ENCODE measurements at regions of chr16 and their contacts with region 1.

Region 1: DNA sequence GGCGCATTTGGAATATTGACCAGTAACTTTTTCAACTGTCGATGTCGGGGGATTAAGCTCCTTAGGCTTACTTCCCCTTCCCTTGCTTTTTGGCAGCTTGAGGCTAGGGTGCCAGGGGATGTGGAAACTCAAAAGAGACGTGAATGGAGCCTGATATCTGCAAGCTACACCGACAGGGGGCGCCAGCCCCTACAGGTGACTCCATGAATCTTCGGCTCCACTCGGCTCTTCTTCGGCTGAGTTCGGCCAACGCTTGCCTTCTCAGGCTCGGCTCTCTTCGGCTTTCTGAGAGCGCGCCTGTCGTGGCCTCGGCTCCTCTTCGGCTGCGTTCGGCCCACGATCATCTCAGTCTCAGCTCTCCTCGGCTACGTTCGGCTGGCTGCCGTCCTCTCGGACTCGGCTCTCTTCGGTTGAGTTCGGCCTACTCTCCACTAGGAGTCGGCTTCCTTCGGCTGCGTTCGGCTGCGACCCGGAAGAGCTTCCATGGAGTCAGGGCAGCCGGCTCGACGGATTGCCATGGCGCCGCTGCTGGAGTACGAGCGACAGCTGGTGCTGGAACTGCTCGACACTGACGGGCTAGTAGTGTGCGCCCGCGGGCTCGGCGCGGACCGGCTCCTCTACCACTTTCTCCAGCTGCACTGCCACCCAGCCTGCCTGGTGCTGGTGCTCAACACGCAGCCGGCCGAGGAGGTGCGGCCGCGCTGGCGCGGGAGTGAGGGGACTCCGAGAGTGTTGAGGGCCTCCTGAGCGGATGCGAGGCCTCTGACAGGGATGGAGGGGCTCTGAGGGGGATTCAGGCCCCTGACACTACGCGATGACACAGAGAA is at the start of gene ERCC4:
- DNase-seq: peak; percentile 100
- ATAC-seq: peak; percentile 96
- H3K4me3 ChIP-seq: peak within 1 kb of the TSS; percentile 64 to 89 (median 79)
- H3K4me3 Mint-ChIP-seq: peak within 1 kb of the TSS; percentile 94
- H3K27ac ChIP-seq: peak within 1 kb of the TSS; percentile 12 to 85
- H3K27ac Mint-ChIP-seq: peak within 1 kb of the TSS; percentile 79
- H3K4me1 ChIP-seq: peaks cover 12 to 15% of the 10 kb centered on the region in 2 donors
- H3K4me1 Mint-ChIP-seq: peaks cover 24% of the 10 kb centered on the region
- H3K27me3 ChIP-seq: no peaks in the 10 kb centered on the region
- H3K27me3 Mint-ChIP-seq: no peaks in the 10 kb centered on the region
- CTCF ChIP-seq: peak; percentile 91
- total RNA-seq, gene ERCC4: 11.9 and 13.2 TPM in 2 replicates

Region 2: GRCh38 chr16:12803203-12804097 is 1116.4 kb before region 1 on chr16 and contains the start of gene CPPED1:
- CTCF ChIA-PET with region 1: no interaction called
- POLR2A ChIA-PET with region 1: no interaction called
- intact Hi-C with region 1: loop called (anchors 5 kb)
- DNase-seq: peak; percentile 95
- ATAC-seq: peak; percentile 88
- H3K4me3 ChIP-seq: peak within 1 kb of the TSS; percentile 68 to 99 (median 73)
- H3K4me3 Mint-ChIP-seq: peak within 1 kb of the TSS; percentile 92
- H3K27ac ChIP-seq: peak within 1 kb of the TSS; percentile 58 to 72
- H3K27ac Mint-ChIP-seq: peak within 1 kb of the TSS; percentile 93
- H3K4me1 ChIP-seq: peaks cover 19 to 24% of the 10 kb centered on the region in 2 donors
- H3K4me1 Mint-ChIP-seq: peaks cover 21% of the 10 kb centered on the region
- H3K27me3 ChIP-seq: peaks cover 0 to 2% (median 0%) of the 10 kb centered on the region in 4 experiments
- H3K27me3 Mint-ChIP-seq: peaks cover 3% of the 10 kb centered on the region
- CTCF ChIP-seq: no peak
- total RNA-seq, gene CPPED1: 11.3 and 14.1 TPM in 2 replicates

Region 3: DNA sequence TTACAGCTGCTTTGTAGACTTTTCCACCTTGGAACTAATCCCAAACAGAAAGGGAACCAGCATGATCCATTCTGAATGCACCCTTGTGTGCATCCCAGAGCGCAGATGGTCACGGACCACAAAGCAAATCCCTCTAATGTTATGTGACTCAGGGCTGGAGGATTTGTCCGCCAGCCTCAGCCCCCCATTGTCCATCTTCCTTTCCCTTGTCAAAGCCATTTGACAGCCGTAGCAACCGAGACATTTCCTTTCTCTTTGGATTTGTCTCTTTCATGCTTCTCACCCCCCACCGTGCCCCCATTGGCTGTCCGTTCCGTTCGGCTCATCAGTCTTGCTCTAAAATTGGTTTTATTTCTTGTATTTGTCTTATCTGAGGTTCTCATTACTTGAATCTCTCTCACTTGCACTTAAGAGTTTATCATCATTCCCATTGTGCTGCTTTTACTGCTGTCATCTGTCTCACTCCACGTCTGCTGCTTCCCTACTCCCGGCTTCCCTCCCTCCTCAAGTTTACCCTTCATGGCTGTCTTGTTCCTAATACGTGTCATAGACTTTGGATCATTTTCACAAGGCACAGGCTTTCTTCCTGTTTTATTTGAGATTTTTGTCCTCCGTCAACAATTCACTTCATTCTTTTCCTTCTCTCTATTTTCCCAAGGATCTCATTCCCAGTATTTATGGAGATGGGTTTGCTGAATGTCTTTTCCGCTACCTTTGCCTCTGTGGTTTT is 163.3 kb before region 1 on chr16:
- CTCF ChIA-PET with region 1: no interaction called
- POLR2A ChIA-PET with region 1: no interaction called
- intact Hi-C with region 1: no loop called
- DNase-seq: no peak
- ATAC-seq: no peak
- H3K4me3 ChIP-seq: no peak overlapping the region
- H3K4me3 Mint-ChIP-seq: no peak overlapping the region
- H3K27ac ChIP-seq: no peak overlapping the region
- H3K27ac Mint-ChIP-seq: no peak overlapping the region
- H3K4me1 ChIP-seq: no peaks in the 10 kb centered on the region
- H3K4me1 Mint-ChIP-seq: no peaks in the 10 kb centered on the region
- H3K27me3 ChIP-seq: peaks cover 0 to 3% (median 0%) of the 10 kb centered on the region in 4 experiments
- H3K27me3 Mint-ChIP-seq: peaks cover 15% of the 10 kb centered on the region
- CTCF ChIP-seq: no peak

Region 4: DNA sequence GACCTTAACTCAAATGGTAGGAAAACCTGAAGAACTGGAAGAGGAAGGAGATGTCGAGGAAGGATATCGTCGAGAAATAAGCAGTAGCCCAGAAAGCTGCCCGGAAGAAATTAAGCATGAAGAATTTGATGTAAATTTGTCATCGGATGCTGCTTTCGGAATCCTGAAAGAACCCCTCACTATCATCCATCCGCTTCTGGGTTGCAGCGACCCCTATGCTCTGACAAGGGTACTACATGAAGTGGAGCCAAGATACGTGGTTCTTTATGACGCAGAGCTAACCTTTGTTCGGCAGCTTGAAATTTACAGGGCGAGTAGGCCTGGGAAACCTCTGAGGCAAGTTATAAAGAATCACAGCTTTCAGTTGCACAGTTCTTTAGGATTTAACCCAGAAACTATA is 15.5 kb after region 1 on chr16:
- CTCF ChIA-PET with region 1: interaction called, 25 read pairs
- POLR2A ChIA-PET with region 1: no interaction called
- intact Hi-C with region 1: no loop called
- DNase-seq: no peak
- ATAC-seq: no peak
- H3K4me3 ChIP-seq: no peak overlapping the region
- H3K4me3 Mint-ChIP-seq: no peak overlapping the region
- H3K27ac ChIP-seq: no peak overlapping the region
- H3K27ac Mint-ChIP-seq: no peak overlapping the region
- H3K4me1 ChIP-seq: no peaks in the 10 kb centered on the region
- H3K4me1 Mint-ChIP-seq: no peaks in the 10 kb centered on the region
- H3K27me3 ChIP-seq: no peaks in the 10 kb centered on the region
- H3K27me3 Mint-ChIP-seq: no peaks in the 10 kb centered on the region
- CTCF ChIP-seq: peak; percentile 66

Region 5: DNA sequence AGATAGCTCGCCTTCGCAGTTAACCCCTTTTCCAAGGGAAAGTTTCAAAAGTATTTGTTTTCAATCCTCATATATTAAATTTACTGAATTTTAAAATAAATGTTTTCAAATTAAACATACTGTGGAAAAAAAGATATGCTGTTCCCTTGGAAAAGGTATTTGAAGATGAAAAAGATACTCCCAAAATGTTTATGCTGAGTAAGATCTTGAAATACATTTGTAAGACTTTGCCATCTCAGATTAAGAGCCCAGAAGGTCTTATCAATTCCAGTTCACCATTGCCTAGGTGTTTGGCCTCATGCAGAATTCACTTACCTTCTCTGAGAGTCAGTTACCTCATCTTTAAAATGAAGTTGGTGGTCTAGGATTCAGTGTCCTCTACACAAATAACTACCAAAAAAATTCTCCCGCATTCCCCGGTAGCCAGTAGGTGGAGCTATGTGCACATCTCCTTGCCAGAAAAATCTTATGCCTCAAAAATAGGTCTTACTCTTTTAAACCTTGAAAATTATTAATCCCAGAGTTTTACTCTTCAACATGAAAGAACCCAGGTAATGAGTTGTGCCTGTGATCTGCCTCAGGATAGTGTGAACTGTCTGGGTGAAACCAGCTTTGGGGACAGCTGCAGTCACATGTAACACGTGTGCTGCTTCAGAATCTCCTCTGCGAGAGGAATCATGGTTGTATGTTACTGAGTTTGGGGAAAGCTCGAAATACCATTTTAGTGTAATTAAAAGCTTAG is 329.6 kb after region 1 on chr16:
- CTCF ChIA-PET with region 1: interaction called, 22 read pairs
- POLR2A ChIA-PET with region 1: no interaction called
- intact Hi-C with region 1: loop called (anchors 2 kb)
- DNase-seq: peak; percentile 66
- ATAC-seq: no peak
- H3K4me3 ChIP-seq: no peak overlapping the region
- H3K4me3 Mint-ChIP-seq: no peak overlapping the region
- H3K27ac ChIP-seq: no peak overlapping the region
- H3K27ac Mint-ChIP-seq: no peak overlapping the region
- H3K4me1 ChIP-seq: no peaks in the 10 kb centered on the region
- H3K4me1 Mint-ChIP-seq: no peaks in the 10 kb centered on the region
- H3K27me3 ChIP-seq: no peaks in the 10 kb centered on the region
- H3K27me3 Mint-ChIP-seq: no peaks in the 10 kb centered on the region
- CTCF ChIP-seq: peak; percentile 95

Region 6: GRCh38 chr16:14600164-14600563 is 680.3 kb after region 1 on chr16:
- CTCF ChIA-PET with region 1: interaction called, 7 read pairs
- POLR2A ChIA-PET with region 1: no interaction called
- intact Hi-C with region 1: loop called (anchors 1 kb)
- DNase-seq: peak; percentile 31
- ATAC-seq: no peak
- H3K4me3 ChIP-seq: no peak overlapping the region
- H3K4me3 Mint-ChIP-seq: no peak overlapping the region
- H3K27ac ChIP-seq: no peak overlapping the region
- H3K27ac Mint-ChIP-seq: no peak overlapping the region
- H3K4me1 ChIP-seq: no peaks in the 10 kb centered on the region
- H3K4me1 Mint-ChIP-seq: peaks cover 3% of the 10 kb centered on the region
- H3K27me3 ChIP-seq: no peaks in the 10 kb centered on the region
- H3K27me3 Mint-ChIP-seq: no peaks in the 10 kb centered on the region
- CTCF ChIP-seq: peak; percentile 69